Lower leg skin (tissue), 4 donors: ENCODE measurements at regions of chr3 and their contacts with region 1.

Region 1: DNA sequence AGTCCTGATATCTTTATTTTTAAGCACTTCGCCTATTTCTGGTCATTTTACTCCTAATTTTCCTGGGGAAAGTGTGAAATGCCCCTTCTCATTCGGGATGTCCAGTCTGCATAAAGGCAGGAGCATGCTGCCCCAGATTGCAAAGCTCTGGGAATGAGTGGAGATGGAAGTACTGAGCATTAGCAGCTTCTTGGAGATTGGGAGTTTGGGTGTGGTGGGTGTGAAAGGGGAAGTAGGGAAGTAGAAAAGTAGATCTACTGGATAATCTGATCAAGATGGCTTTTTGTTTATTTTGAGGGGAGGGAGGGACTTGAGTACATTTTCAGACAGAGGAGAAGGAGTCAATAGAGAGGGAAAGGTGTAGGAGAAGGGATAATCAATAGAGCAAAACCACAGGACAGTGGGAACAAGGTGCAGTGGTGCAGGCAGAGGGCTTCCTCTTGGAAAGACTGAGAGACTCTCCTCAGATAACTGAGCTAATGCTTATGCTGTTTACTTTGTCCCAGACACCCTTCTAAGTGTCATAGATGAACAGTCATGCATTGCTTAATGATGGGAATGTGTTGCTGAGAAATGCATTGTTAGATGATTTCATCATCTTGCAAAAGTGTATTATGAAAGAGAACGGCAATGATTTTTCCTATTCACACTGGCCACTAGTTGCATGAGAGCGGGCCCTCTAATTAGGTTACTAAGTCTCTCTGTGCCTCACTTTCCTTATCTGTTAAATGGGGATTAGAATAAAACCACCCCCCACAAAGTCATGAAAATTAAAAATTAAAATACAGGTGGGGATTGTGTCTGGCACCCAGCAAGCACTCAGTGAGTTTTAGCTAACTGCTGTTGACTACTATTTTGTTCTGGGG is 45.5 kb downstream of the PHLDB2 start:
- DNase-seq: no peak
- H3K4me3 ChIP-seq: no peak overlapping the region
- CTCF ChIP-seq: no peak
- POLR2A ChIP-seq: no peak

Region 2: DNA sequence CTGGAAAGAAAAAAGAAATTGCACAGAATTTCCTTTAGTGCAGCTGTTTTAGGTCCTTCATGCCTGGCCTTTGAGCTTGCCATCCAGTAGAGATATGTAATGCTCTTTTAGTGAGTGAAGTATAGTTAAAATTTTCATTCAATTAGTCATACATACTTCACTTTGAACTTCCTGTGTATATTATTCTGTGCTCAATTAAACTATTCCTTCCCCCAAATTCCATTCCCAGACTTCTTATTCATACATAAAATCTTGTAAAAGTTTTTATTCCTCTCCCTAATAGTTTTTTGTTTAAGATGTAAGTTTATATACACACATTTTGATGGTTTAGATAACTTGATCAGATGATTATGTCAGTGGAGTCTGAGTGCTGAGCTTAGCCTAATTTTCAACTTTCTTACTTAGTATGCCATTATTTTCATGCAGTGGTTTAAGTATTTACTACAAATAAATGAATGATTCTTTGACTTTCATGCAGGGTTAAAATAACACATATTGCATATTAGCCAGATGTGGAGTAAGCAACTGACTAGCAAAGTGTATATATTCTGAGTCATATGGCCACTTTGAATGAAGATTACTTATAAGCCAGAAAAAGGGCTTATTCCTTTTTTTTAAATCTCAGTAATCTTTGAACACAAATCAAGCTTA is 31.7 kb after region 1 on chr3:
- intact Hi-C with region 1: loop called (anchors 1 kb)
- DNase-seq: no peak
- H3K4me3 ChIP-seq: no peak overlapping the region
- CTCF ChIP-seq: no peak
- POLR2A ChIP-seq: no peak